ENCODE measurements at regions of chr13 and their contacts with region 1.

Region 1: GRCh38 chr13:41944635-41945397 is 16.1 kb downstream of the VWA8 start:
- DNase-seq: no peak
- H3K4me3 Mint-ChIP-seq: no peak overlapping the region
- H3K27ac Mint-ChIP-seq: no peak overlapping the region
- H3K4me1 Mint-ChIP-seq: peaks cover 13% of the 10 kb centered on the region
- H3K27me3 Mint-ChIP-seq: no peaks in the 10 kb centered on the region

Region 2: DNA sequence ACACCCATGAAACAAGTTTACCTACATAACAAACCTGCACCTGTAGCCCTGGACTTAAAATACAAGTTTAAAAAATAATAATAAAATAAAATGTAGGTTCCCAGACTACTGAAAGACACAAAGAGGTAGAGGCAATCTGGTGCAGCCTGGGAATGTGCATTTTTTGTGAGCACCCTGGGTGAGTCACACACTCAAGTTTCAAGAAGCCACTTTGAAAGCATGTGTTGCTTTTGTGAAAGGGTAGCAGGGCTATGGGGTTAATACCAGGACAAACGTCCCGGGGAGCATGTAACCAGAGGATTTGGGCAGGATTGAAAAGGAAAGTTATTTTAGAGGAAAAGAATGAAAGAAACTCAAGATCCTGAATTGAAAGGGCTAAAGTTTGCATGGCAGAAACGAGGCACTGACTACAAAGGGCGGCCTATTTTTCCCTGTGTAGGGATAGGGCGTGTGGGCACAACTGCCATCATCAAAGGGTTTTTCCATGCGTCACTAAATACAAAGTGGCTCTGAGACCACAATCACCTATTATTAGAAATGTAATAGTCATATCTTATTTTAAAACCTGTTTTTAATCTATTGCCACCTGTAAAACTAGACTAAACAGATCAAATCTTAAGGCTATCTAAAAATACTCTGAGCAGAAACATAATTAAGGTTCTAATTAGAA is 1974.5 kb before region 1 on chr13:
- CTCF ChIA-PET with region 1: no interaction called
- intact Hi-C with region 1: no loop called
- DNase-seq: no peak
- H3K4me3 Mint-ChIP-seq: no peak overlapping the region
- H3K27ac Mint-ChIP-seq: no peak overlapping the region
- H3K4me1 Mint-ChIP-seq: peaks cover 3% of the 10 kb centered on the region
- H3K27me3 Mint-ChIP-seq: no peaks in the 10 kb centered on the region

Region 3: GRCh38 chr13:41931337-41931736 is 13.5 kb before region 1 on chr13:
- CTCF ChIA-PET with region 1: interaction called, 4 read pairs
- intact Hi-C with region 1: loop called (anchors 2 kb)
- DNase-seq: no peak
- H3K4me3 Mint-ChIP-seq: no peak overlapping the region
- H3K27ac Mint-ChIP-seq: peak overlapping the region; percentile 81
- H3K4me1 Mint-ChIP-seq: peaks cover 77% of the 10 kb centered on the region
- H3K27me3 Mint-ChIP-seq: no peaks in the 10 kb centered on the region

Region 4: GRCh38 chr13:41970022-41970421 is 25.2 kb after region 1 on chr13:
- CTCF ChIA-PET with region 1: no interaction called
- intact Hi-C with region 1: no loop called
- DNase-seq: no peak
- H3K4me3 Mint-ChIP-seq: no peak overlapping the region
- H3K27ac Mint-ChIP-seq: no peak overlapping the region
- H3K4me1 Mint-ChIP-seq: peaks cover 7% of the 10 kb centered on the region
- H3K27me3 Mint-ChIP-seq: no peaks in the 10 kb centered on the region

Region 5: GRCh38 chr13:42119875-42120274 is 175.1 kb after region 1 on chr13:
- CTCF ChIA-PET with region 1: no interaction called
- intact Hi-C with region 1: no loop called
- DNase-seq: no peak
- H3K4me3 Mint-ChIP-seq: no peak overlapping the region
- H3K27ac Mint-ChIP-seq: no peak overlapping the region
- H3K4me1 Mint-ChIP-seq: peaks cover 3% of the 10 kb centered on the region
- H3K27me3 Mint-ChIP-seq: no peaks in the 10 kb centered on the region

Region 6: GRCh38 chr13:42148538-42148937 is 203.7 kb after region 1 on chr13:
- CTCF ChIA-PET with region 1: no interaction called
- intact Hi-C with region 1: no loop called
- DNase-seq: no peak
- H3K4me3 Mint-ChIP-seq: no peak overlapping the region
- H3K27ac Mint-ChIP-seq: no peak overlapping the region
- H3K4me1 Mint-ChIP-seq: peaks cover 16% of the 10 kb centered on the region
- H3K27me3 Mint-ChIP-seq: no peaks in the 10 kb centered on the region

Measured in activated naive CD4-positive, alpha-beta T cell treated with anti-CD3 and anti-CD28 coated beads for 36 hours (primary cell).